K562 (cell line): ENCODE measurements at regions of chr4 and their contacts with region 1.

Region 1: DNA sequence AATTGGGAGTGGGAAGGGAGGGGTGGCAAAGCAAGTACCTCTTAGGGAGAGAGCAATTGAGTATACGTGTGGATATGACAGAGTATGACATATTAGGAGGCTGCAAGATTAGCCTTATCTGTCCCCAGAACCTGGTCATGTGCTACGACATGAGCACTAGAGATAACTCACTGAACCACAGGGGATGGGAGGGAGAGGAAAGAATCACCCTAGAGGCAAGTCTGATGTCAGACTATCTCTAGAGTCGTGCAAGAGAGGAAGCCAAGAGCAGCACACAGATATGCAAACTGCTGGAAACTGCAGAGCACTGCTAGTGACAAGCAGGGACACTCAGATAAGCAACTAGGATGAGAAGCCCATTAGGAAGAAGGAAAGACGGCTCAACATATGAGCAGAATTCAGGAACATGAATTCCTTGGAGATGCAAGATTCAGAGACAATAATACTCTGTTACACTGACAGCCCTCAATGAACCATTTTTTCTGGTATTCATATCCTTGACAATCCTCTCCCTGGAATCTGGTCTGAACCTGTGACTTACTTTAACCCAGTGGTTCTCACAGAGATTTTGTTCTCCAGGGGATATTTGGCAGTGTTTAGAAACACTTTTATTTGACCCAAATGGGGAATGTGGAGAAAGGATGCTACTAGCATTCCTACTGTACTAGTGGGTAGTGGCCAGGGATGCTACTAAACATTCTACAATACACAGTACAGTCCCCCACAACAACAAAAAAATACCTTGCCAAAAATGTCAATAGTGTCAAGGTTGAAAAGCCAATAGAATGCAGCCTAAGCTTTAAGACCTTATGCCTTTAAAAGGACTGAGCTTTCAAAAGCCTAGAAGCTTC is 84.0 kb upstream of the BMP2K start:
- DNase-seq: peak; percentile 91 to 98 (median 94)
- ATAC-seq: peak; percentile 94
- H3K4me3 ChIP-seq: no peak overlapping the region; the same call in 1 of the 2 replicates
- H3K27ac ChIP-seq: peak overlapping the region; percentile 73
- H3K4me1 ChIP-seq: peaks cover 32 to 74% of the 10 kb centered on the region in 2 experiments
- H3K27me3 ChIP-seq: no peaks in the 10 kb centered on the region
- CTCF ChIP-seq: no peak; a peak in 1 of 6 replicates
- EP300 ChIP-seq: peak; percentile 100
- POLR2A ChIP-seq: no peak
- RAD21 ChIP-seq: peak; percentile 46 to 59; a peak in 3 of 4 replicates

Region 2: DNA sequence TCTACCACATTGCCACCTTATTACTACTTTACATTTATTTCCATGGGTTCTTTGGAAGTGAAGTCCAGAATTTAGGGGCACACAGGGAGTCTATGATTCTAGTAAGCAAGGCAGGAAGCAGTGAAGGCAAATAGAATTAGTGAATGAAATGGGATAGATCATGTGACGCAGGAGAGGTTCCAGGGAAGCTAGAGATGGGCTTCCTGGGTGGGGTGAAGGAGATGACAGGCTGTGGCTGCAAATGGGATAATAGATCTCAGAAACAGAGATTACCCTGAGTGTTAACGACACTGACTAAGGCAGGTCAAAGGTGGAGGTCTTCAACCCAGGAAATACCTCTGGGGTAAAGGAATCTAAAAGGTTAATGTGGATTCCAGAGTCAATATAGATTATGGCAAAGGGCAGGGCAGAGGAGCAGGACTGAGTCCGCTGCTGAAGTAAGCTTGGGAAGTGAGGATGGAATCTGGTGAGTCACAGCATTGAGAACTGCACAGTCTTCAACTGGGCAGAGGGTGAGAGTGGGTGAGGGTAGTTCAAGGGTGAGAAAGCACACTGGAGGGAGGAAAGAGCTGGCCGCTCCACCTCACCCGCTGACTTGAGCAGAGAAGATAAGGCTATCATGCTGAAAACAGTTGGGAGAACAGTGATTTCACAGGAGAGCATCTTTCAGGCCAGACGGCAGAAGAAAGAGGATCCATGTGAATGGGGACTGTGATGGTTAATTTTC is 69.8 kb before region 1 on chr4:
- CTCF ChIA-PET with region 1: no interaction called
- POLR2A ChIA-PET with region 1: no interaction called
- in situ Hi-C with region 1: no loop called
- intact Hi-C with region 1: loop called (anchors 2 kb)
- DNase-seq: peak; percentile 63 to 87 (median 69)
- ATAC-seq: peak; percentile 68
- H3K4me3 ChIP-seq: no peak overlapping the region
- H3K27ac ChIP-seq: no peak overlapping the region; the same call in 2 of the 3 replicates
- H3K4me1 ChIP-seq: peaks cover 15 to 55% of the 10 kb centered on the region in 2 experiments
- H3K27me3 ChIP-seq: no peaks in the 10 kb centered on the region
- CTCF ChIP-seq: no peak
- EP300 ChIP-seq: peak; percentile 91
- POLR2A ChIP-seq: no peak
- RAD21 ChIP-seq: peak in 1 of 2 experiments; percentile 24; a peak in 2 of 4 replicates

Region 3: DNA sequence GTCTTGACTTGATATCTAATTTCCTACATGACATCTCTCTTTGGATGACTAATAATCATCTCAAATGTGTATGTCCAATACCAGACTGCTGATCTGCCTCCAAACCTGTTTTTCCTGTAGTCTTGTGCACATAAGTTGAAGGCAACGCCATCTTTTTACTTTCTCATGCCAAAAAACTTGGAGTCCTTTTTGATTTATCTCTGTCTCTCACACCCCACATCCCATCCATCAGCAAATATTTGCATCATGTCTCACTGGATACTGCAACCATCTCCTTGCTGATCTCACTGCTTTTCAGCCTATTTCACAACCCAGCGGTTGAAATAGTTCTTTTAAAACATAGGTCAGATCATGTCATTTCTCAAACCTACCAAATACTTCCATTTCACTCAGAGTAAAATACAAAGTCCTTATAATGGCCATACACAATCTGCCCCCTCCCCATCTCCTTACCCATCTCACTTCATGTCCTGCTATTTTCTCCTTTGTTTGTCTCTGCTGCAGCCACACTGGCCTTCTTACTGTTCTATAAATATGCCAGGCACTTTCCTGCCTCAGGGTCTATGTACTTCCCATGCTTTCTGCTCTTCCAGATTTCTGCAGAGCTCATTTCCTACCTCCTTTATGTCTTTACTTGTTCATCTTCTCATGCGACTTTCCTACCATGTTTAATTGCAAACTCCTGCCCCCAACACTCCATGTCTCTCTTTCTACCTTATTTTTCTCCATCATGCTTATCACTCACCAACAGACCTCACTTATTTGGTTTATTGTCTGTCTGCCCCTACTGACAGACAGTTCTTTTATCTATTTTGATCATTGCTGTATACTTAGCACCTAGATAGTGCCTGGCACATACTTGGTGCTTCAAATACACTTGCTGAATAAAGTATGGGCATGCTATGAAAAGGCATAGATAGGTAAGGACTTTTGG is 41.8 kb before region 1 on chr4:
- CTCF ChIA-PET with region 1: no interaction called
- POLR2A ChIA-PET with region 1: no interaction called
- in situ Hi-C with region 1: no loop called
- intact Hi-C with region 1: loop called (anchors 2 kb)
- DNase-seq: peak; percentile 34 to 65 (median 52)
- ATAC-seq: peak; percentile 71
- H3K4me3 ChIP-seq: no peak overlapping the region
- H3K27ac ChIP-seq: peak overlapping the region; percentile 39; the same call in 2 of the 3 replicates
- H3K4me1 ChIP-seq: peaks cover 44 to 61% of the 10 kb centered on the region in 2 experiments
- H3K27me3 ChIP-seq: no peaks in the 10 kb centered on the region
- CTCF ChIP-seq: no peak
- EP300 ChIP-seq: peak; percentile 85
- POLR2A ChIP-seq: no peak
- RAD21 ChIP-seq: 0 out of 4 replicates have a peak, but pooled peaks of 1 of the 2 experiments have one; percentile 16

Region 4: DNA sequence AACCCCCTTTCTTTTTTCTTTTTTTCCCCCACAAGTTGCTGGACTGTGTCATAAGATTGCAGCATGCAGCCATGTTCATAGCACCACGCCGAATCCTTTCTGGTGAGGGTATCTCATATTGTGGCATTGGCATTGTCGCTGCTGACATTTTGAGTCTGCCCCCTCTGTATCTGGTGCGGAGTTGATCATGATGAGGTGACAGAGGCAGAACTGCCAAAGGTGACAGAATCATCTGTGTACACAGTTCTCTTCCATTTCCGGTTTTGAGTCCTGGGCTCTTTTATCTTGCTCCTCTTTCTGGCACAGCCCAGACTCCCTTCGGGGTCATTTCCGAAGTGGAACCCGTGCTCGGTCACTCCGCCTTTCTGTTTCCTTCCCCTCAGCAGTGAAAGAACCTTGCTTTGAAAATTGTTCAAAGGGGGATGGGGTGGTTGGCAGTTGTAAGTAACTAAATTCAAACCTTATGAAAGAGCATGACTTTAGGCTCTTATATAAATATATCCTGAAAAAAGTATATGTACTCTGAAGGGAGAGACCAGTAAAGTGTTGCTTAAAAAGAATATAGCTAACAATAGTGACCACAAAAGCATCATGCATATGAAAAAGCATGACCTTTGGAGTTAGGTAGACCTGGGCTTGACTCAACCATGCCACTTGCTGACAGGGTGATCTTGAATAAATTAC is 28.9 kb after region 1 on chr4:
- CTCF ChIA-PET with region 1: no interaction called
- POLR2A ChIA-PET with region 1: no interaction called
- in situ Hi-C with region 1: no loop called
- intact Hi-C with region 1: loop called (anchors 2 kb)
- DNase-seq: peak; percentile 30 to 93 (median 57)
- ATAC-seq: peak; percentile 96
- H3K4me3 ChIP-seq: peak overlapping the region; percentile 18; the same call in 1 of the 2 replicates
- H3K27ac ChIP-seq: peak overlapping the region; percentile 93
- H3K4me1 ChIP-seq: peaks cover 16 to 45% of the 10 kb centered on the region in 2 experiments
- H3K27me3 ChIP-seq: no peaks in the 10 kb centered on the region
- CTCF ChIP-seq: no peak
- EP300 ChIP-seq: peak; percentile 97
- POLR2A ChIP-seq: peak; percentile 72
- RAD21 ChIP-seq: peak in 1 of 2 experiments; percentile 35; a peak in 2 of 4 replicates

Region 5: DNA sequence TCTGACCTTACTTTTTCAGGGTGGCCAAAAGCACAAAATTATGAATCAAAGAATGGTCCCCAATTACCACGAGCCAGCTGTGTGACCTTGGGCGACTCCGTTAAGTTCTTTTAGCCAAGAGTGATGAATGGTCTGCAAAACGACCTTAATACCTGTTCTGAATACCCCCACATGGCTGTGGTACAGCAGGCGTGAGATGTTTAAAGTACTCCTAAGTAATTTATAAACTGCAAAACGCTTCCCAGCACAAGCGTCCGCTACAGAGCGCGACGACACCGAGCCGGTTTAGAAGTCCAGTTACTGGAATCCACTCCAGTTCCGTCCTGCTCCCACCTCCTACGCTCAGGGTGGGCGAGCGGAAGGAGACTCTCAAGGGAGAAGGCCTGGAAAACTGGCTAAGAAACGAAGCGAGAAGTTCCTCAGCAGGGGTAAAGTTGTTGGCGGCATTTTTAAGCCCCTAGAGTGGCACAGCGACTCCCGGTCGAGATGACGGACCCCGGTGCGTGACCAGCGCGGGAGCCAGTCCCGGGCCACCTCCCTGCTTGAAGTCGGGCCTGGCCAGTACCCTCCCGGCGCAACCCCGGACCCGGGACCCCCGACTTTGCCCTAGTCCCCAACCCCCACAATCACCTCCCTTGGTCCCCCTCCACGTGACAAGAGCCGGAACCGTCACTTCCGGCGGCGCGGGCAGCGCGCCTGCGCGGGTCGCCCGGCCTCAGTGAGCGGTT is 83.3 kb after region 1 on chr4:
- CTCF ChIA-PET with region 1: interaction called, 3 read pairs
- POLR2A ChIA-PET with region 1: no interaction called
- in situ Hi-C with region 1: no loop called
- intact Hi-C with region 1: loop called (anchors 1 kb)
- DNase-seq: peak in 3 of 4 experiments; percentile 89 to 92 (median 91)
- ATAC-seq: peak; percentile 42
- H3K4me3 ChIP-seq: peak overlapping the region; percentile 89
- H3K27ac ChIP-seq: peak overlapping the region; percentile 98
- H3K4me1 ChIP-seq: peaks cover 15 to 34% of the 10 kb centered on the region in 2 experiments
- H3K27me3 ChIP-seq: no peaks in the 10 kb centered on the region
- CTCF ChIP-seq: no peak
- EP300 ChIP-seq: peak; percentile 16; the same call in 1 of the 2 replicates
- POLR2A ChIP-seq: peak; percentile 76
- RAD21 ChIP-seq: no peak

Region 6: GRCh38 chr4:79357365-79357764 is 665.2 kb after region 1 on chr4:
- CTCF ChIA-PET with region 1: no interaction called
- POLR2A ChIA-PET with region 1: no interaction called
- in situ Hi-C with region 1: no loop called
- intact Hi-C with region 1: no loop called
- DNase-seq: no peak
- ATAC-seq: no peak
- H3K4me3 ChIP-seq: no peak overlapping the region
- H3K27ac ChIP-seq: no peak overlapping the region
- H3K4me1 ChIP-seq: no peaks in the 10 kb centered on the region
- H3K27me3 ChIP-seq: no peaks in the 10 kb centered on the region
- CTCF ChIP-seq: no peak
- EP300 ChIP-seq: no peak
- POLR2A ChIP-seq: no peak
- RAD21 ChIP-seq: no peak